Calu3 (cell line): ENCODE measurements at regions of chr17 and their contacts with region 1.

Region 1: GRCh38 chr17:38557836-38558727 is 47.7 kb downstream of the SRCIN1 start:
- DNase-seq: peak; percentile 100
- H3K4me3 Mint-ChIP-seq: peak overlapping the region; percentile 78
- H3K27ac Mint-ChIP-seq: peak overlapping the region; percentile 52
- H3K4me1 Mint-ChIP-seq: peaks cover 43% of the 10 kb centered on the region
- H3K27me3 Mint-ChIP-seq: peaks cover 10% of the 10 kb centered on the region
- CTCF ChIP-seq: peak; percentile 100

Region 2: GRCh38 chr17:38539386-38539785 is 18.7 kb before region 1 on chr17:
- CTCF ChIA-PET with region 1: interaction called, 37 read pairs
- intact Hi-C with region 1: no loop called
- DNase-seq: no peak
- H3K4me3 Mint-ChIP-seq: no peak overlapping the region
- H3K27ac Mint-ChIP-seq: no peak overlapping the region
- H3K4me1 Mint-ChIP-seq: no peaks in the 10 kb centered on the region
- H3K27me3 Mint-ChIP-seq: peaks cover 75% of the 10 kb centered on the region
- CTCF ChIP-seq: no peak

Region 3: GRCh38 chr17:38591759-38592241 is 33.7 kb after region 1 on chr17:
- CTCF ChIA-PET with region 1: interaction called, 437 read pairs
- intact Hi-C with region 1: no loop called
- DNase-seq: peak; percentile 71
- H3K4me3 Mint-ChIP-seq: no peak overlapping the region
- H3K27ac Mint-ChIP-seq: no peak overlapping the region
- H3K4me1 Mint-ChIP-seq: peaks cover 24% of the 10 kb centered on the region
- H3K27me3 Mint-ChIP-seq: peaks cover 80% of the 10 kb centered on the region
- CTCF ChIP-seq: no peak

Region 4: GRCh38 chr17:38617011-38617867 is 59.2 kb after region 1 on chr17:
- CTCF ChIA-PET with region 1: interaction called, 18 read pairs
- intact Hi-C with region 1: no loop called
- DNase-seq: no peak
- H3K4me3 Mint-ChIP-seq: no peak overlapping the region
- H3K27ac Mint-ChIP-seq: no peak overlapping the region
- H3K4me1 Mint-ChIP-seq: peaks cover 18% of the 10 kb centered on the region
- H3K27me3 Mint-ChIP-seq: peaks cover 61% of the 10 kb centered on the region
- CTCF ChIP-seq: no peak

Region 5: GRCh38 chr17:38637951-38638350 is 79.9 kb after region 1 on chr17:
- CTCF ChIA-PET with region 1: no interaction called
- intact Hi-C with region 1: no loop called
- DNase-seq: no peak
- H3K4me3 Mint-ChIP-seq: no peak overlapping the region
- H3K27ac Mint-ChIP-seq: no peak overlapping the region
- H3K4me1 Mint-ChIP-seq: no peaks in the 10 kb centered on the region
- H3K27me3 Mint-ChIP-seq: peaks cover 27% of the 10 kb centered on the region
- CTCF ChIP-seq: no peak

Region 6: GRCh38 chr17:38667099-38667786 is 109.2 kb after region 1 on chr17:
- CTCF ChIA-PET with region 1: interaction called, 496 read pairs
- intact Hi-C with region 1: loop called (anchors 1 kb)
- DNase-seq: peak; percentile 96
- H3K4me3 Mint-ChIP-seq: no peak overlapping the region
- H3K27ac Mint-ChIP-seq: no peak overlapping the region
- H3K4me1 Mint-ChIP-seq: peaks cover 15% of the 10 kb centered on the region
- H3K27me3 Mint-ChIP-seq: peaks cover 69% of the 10 kb centered on the region
- CTCF ChIP-seq: peak; percentile 100

Region 7: DNA sequence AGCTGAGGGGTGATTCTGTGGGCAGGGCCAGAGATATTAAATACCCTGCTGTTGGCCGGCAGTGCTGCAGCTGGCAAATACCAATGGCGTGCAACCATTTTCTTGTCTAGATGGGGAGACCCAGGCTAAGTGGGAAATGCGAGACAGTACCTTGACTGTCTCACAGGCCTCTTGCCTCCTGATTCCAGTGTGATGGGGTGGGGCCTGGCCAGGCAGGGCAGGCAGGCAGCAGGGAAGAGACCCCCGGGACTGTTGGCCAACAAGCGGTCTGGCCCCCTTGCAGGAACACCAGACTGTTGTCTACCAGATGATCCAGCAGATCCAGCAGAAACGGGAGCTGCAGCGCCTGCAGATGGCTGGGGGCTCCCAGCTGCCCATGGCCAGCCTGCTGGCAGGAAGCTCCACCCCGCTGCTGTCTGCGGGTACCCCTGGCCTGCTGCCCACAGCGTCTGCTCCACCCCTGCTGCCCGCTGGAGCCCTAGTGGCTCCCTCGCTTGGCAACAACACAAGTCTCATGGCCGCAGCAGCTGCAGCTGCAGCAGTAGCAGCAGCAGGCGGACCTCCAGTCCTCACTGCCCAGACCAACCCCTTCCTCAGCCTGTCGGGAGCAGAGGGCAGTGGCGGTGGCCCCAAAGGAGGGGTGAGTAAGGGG is 166.4 kb after region 1 on chr17:
- CTCF ChIA-PET with region 1: no interaction called
- intact Hi-C with region 1: no loop called
- DNase-seq: no peak
- H3K4me3 Mint-ChIP-seq: no peak overlapping the region
- H3K27ac Mint-ChIP-seq: no peak overlapping the region
- H3K4me1 Mint-ChIP-seq: peaks cover 12% of the 10 kb centered on the region
- H3K27me3 Mint-ChIP-seq: no peaks in the 10 kb centered on the region
- CTCF ChIP-seq: no peak

Region 8: GRCh38 chr17:38735161-38735997 is 177.3 kb after region 1 on chr17:
- CTCF ChIA-PET with region 1: interaction called, 13 read pairs
- intact Hi-C with region 1: no loop called
- DNase-seq: peak; percentile 93
- H3K4me3 Mint-ChIP-seq: no peak overlapping the region
- H3K27ac Mint-ChIP-seq: peak overlapping the region; percentile 15
- H3K4me1 Mint-ChIP-seq: peaks cover 44% of the 10 kb centered on the region
- H3K27me3 Mint-ChIP-seq: no peaks in the 10 kb centered on the region
- CTCF ChIP-seq: peak; percentile 100